CD8-positive, alpha-beta T cell (primary cell): ENCODE measurements at regions of chr1 and their contacts with region 1.

Region 1: GRCh38 chr1:109112652-109113285 is 1.1 kb upstream of the ELAPOR1 start:
- DNase-seq: peak; percentile 81 to 94 (median 89)
- ATAC-seq: peak; percentile 56
- H3K4me3 ChIP-seq: peak overlapping the region; percentile 46 to 66
- H3K4me3 Mint-ChIP-seq: peak overlapping the region; percentile 83
- H3K27ac ChIP-seq: peak overlapping the region; percentile 34 to 48
- H3K27ac Mint-ChIP-seq: peak overlapping the region; percentile 81
- H3K4me1 ChIP-seq: peaks cover 22% of the 10 kb centered on the region
- H3K4me1 Mint-ChIP-seq: peaks cover 29% of the 10 kb centered on the region
- H3K27me3 ChIP-seq: peaks cover 0 to 4% of the 10 kb centered on the region in 2 experiments
- H3K27me3 Mint-ChIP-seq: peaks cover 2% of the 10 kb centered on the region
- CTCF ChIP-seq: peak; percentile 90

Region 2: DNA sequence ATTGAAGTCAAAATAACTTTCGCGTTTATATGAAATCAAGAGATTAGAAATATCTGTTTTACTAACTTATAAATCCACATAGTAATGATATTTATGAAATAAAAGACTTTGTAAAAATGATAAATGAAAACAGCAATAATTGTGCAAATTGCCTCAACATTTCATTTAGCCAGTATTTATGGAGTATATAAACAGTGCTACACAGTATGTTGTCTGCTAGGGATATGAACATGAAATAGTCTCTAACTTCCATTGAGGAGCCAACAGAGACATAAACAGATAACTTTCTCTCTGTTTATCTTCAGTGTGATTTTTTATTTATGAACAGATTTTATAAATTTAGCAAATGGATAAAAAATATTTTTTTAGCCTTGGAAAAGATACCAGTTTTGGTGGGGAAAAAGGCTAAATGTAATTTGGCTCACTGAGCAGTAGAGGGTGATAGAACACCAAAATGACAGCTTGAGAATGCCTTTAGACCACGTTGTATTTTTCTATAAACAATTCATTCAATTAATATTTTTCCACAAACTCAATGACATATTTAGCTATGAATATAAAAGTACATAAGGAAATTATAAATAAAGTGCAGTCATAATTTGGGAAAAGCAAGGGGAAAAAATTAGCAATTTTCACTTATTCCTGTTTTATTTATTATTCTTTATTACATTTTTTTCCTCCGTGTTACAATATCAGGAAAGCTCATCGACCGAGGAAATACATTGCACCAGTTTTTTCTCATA is 600.4 kb before region 1 on chr1:
- CTCF ChIA-PET with region 1: no interaction called
- POLR2A ChIA-PET with region 1: no interaction called
- intact Hi-C with region 1: loop called in 1 of 2 experiments (anchors 10 kb)
- DNase-seq: peak in 2 of 9 experiments; percentile 65 to 75
- ATAC-seq: peak; percentile 69
- H3K4me3 ChIP-seq: no peak overlapping the region
- H3K4me3 Mint-ChIP-seq: no peak overlapping the region
- H3K27ac ChIP-seq: no peak overlapping the region
- H3K27ac Mint-ChIP-seq: no peak overlapping the region
- H3K4me1 ChIP-seq: no peaks in the 10 kb centered on the region
- H3K4me1 Mint-ChIP-seq: no peaks in the 10 kb centered on the region
- H3K27me3 ChIP-seq: no peaks in the 10 kb centered on the region
- H3K27me3 Mint-ChIP-seq: peaks cover 21% of the 10 kb centered on the region
- CTCF ChIP-seq: peak; percentile 99

Region 3: DNA sequence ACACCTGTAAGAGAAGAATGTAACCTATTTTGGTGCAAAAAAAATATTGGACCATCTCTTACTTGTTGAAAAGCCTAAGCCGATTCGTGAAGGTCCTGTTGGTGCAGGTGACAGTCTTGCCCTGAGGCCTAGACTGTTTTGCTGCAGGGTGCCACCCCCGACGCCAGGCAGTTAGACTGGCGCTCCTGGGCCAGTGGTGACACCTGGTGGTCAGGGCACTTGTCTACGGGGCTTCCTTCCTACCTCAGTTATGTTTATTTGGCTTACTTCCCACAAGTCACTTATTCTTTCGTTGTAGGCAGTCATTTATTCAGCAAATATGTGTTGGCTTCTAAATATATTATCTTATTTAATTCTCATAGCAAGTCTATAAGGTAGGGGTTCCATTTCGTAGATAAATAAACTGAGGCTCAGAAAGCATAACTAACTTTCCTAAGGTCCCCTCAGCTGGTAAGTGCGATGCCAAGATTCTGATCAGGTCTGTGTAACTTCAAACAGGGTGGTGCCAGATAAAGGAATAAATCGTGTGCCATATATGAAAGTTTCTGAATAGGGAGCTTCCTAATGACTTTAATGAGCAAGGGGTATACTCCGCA is 550.9 kb before region 1 on chr1:
- CTCF ChIA-PET with region 1: no interaction called
- POLR2A ChIA-PET with region 1: no interaction called
- intact Hi-C with region 1: no loop called
- DNase-seq: peak; percentile 73 to 92 (median 85)
- ATAC-seq: peak; percentile 58
- H3K4me3 ChIP-seq: peak overlapping the region; percentile 5 to 72
- H3K4me3 Mint-ChIP-seq: peak overlapping the region; percentile 64
- H3K27ac ChIP-seq: no peak overlapping the region
- H3K27ac Mint-ChIP-seq: peak overlapping the region; percentile 47
- H3K4me1 ChIP-seq: peaks cover 27% of the 10 kb centered on the region
- H3K4me1 Mint-ChIP-seq: peaks cover 48% of the 10 kb centered on the region
- H3K27me3 ChIP-seq: no peaks in the 10 kb centered on the region
- H3K27me3 Mint-ChIP-seq: no peaks in the 10 kb centered on the region
- CTCF ChIP-seq: peak; percentile 87

Region 4: GRCh38 chr1:108963052-108963686 is 149.6 kb before region 1 on chr1 and contains the start of gene CLCC1:
- CTCF ChIA-PET with region 1: interaction called, 3 read pairs
- POLR2A ChIA-PET with region 1: no interaction called
- intact Hi-C with region 1: loop called in 1 of 2 experiments (anchors 5 kb)
- DNase-seq: peak; percentile 83 to 96 (median 91)
- ATAC-seq: peak; percentile 87
- H3K4me3 ChIP-seq: peak within 1 kb of the TSS; percentile 57 to 86
- H3K4me3 Mint-ChIP-seq: peak within 1 kb of the TSS; percentile 87
- H3K27ac ChIP-seq: peak within 1 kb of the TSS; percentile 75 to 88
- H3K27ac Mint-ChIP-seq: peak within 1 kb of the TSS; percentile 92
- H3K4me1 ChIP-seq: peaks cover 24% of the 10 kb centered on the region
- H3K4me1 Mint-ChIP-seq: peaks cover 39% of the 10 kb centered on the region
- H3K27me3 ChIP-seq: no peaks in the 10 kb centered on the region
- H3K27me3 Mint-ChIP-seq: no peaks in the 10 kb centered on the region
- CTCF ChIP-seq: no peak
- total RNA-seq, gene CLCC1: 4.6 to 5.8 TPM

Region 5: GRCh38 chr1:109041621-109042468 is 70.9 kb before region 1 on chr1 and contains the start of gene WDR47:
- CTCF ChIA-PET with region 1: no interaction called
- POLR2A ChIA-PET with region 1: interaction called, 4 read pairs
- intact Hi-C with region 1: loop called (anchors 1 kb)
- DNase-seq: peak; percentile 92 to 99 (median 96)
- ATAC-seq: peak; percentile 96
- H3K4me3 ChIP-seq: peak within 1 kb of the TSS; percentile 97 to 99
- H3K4me3 Mint-ChIP-seq: peak within 1 kb of the TSS; percentile 93
- H3K27ac ChIP-seq: peak within 1 kb of the TSS; percentile 81 to 94
- H3K27ac Mint-ChIP-seq: peak within 1 kb of the TSS; percentile 92
- H3K4me1 ChIP-seq: peaks cover 10% of the 10 kb centered on the region
- H3K4me1 Mint-ChIP-seq: peaks cover 16% of the 10 kb centered on the region
- H3K27me3 ChIP-seq: no peaks in the 10 kb centered on the region
- H3K27me3 Mint-ChIP-seq: no peaks in the 10 kb centered on the region
- CTCF ChIP-seq: no peak
- total RNA-seq, gene WDR47: 31.5 to 32.6 TPM

Region 6: DNA sequence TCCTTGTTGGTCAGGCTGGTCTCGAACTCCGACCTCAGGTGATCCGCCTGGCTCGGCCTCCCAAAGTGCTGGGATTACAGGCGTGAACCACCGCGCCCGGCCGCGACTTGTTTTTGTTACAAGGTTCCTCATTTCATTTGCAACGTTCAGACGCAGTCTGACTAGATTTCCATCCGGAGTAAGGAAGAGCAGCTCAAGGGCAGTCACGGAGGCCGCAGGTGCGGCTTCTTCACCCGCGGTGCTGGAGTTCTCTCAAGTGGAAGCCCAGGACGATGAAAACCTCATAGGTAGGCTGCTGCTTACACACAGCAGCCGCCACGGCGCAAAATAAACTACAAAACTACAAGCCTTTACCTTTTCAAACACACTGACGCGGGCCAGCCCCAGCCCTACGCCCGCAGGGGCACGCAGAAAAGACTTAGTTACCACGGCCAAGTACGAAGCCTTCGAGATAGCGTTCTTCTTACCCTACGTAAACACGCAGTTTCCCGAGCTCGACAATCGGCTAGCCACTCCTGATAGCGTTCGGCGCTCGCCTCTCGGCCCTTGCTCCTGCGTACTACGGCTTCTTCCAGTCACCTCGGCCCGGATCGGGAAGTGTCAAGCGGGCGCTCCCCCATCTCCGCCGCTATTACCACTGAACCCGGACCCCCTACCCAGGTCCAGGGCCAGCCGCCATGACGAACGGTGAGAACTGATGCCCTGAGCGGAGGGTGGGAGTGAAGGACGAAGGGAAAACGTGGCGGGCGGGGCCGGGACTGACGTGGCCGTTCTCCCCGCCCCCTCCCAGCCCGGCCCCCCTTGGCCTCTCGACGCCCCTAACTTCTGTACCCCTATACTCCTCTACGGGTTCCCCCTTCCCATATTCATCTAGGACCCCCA is 22.3 kb before region 1 on chr1 and contains the start of gene TMEM167B:
- CTCF ChIA-PET with region 1: interaction called, 14 read pairs
- POLR2A ChIA-PET with region 1: no interaction called
- intact Hi-C with region 1: no loop called
- DNase-seq: peak; percentile 76 to 94 (median 88)
- ATAC-seq: peak; percentile 94
- H3K4me3 ChIP-seq: peak within 1 kb of the TSS; percentile 84 to 96
- H3K4me3 Mint-ChIP-seq: peak within 1 kb of the TSS; percentile 96
- H3K27ac ChIP-seq: peak within 1 kb of the TSS; percentile 82 to 98
- H3K27ac Mint-ChIP-seq: peak within 1 kb of the TSS; percentile 95
- H3K4me1 ChIP-seq: peaks cover 20% of the 10 kb centered on the region
- H3K4me1 Mint-ChIP-seq: peaks cover 33% of the 10 kb centered on the region
- H3K27me3 ChIP-seq: no peaks in the 10 kb centered on the region
- H3K27me3 Mint-ChIP-seq: no peaks in the 10 kb centered on the region
- CTCF ChIP-seq: no peak
- total RNA-seq, gene TMEM167B: 66.3 to 68.0 TPM

Region 7: DNA sequence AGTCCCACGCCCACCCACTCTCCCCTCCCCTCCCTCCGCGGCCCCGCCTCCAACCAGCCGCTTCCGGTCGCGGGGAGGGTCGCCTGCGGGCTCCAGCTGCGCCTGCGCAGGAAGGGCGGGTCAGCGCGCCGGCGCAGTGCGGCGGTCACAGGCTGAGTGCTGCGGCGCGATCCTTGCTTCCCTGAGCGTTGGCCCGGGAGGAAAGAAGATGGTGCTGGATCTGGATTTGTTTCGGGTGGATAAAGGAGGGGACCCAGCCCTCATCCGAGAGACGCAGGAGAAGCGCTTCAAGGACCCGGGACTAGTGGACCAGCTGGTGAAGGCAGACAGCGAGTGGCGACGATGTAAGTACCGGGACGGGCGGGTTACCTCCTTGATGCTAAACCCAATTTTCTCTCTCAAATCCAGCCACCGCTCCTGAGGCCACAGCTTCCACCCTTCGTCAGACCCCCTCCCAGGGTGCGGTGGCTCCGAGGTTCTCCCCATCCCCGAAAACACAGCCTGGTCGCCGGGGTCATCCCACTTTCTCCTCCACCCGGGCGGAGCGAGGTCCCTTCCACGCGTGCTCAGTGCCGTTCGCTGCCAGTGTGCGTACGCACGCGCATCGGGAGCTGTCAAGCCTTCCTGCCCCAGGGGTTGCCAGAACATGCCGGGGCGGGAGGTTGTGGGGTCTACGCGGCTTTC is 101.2 kb after region 1 on chr1 and contains the start of gene SARS1:
- CTCF ChIA-PET with region 1: interaction called, 3 read pairs
- POLR2A ChIA-PET with region 1: no interaction called
- intact Hi-C with region 1: loop called (anchors 1 to 5 kb)
- DNase-seq: peak; percentile 67 to 94 (median 85)
- ATAC-seq: peak; percentile 86
- H3K4me3 ChIP-seq: peak within 1 kb of the TSS; percentile 96 to 100
- H3K4me3 Mint-ChIP-seq: peak within 1 kb of the TSS; percentile 100
- H3K27ac ChIP-seq: peak within 1 kb of the TSS; percentile 79
- H3K27ac Mint-ChIP-seq: peak within 1 kb of the TSS; percentile 95
- H3K4me1 ChIP-seq: peaks cover 27% of the 10 kb centered on the region
- H3K4me1 Mint-ChIP-seq: peaks cover 44% of the 10 kb centered on the region
- H3K27me3 ChIP-seq: no peaks in the 10 kb centered on the region
- H3K27me3 Mint-ChIP-seq: peaks cover 2% of the 10 kb centered on the region
- CTCF ChIP-seq: no peak
- total RNA-seq, gene SARS1: 113 to 118 TPM

Region 8: GRCh38 chr1:109483672-109484518 is 371.1 kb after region 1 on chr1 and contains the start of gene ATXN7L2:
- CTCF ChIA-PET with region 1: no interaction called
- POLR2A ChIA-PET with region 1: interaction called, 3 read pairs
- intact Hi-C with region 1: loop called in 1 of 2 experiments (anchors 5 kb)
- DNase-seq: peak; percentile 87 to 97 (median 92)
- ATAC-seq: peak; percentile 81
- H3K4me3 ChIP-seq: peak within 1 kb of the TSS; percentile 78 to 90
- H3K4me3 Mint-ChIP-seq: peak within 1 kb of the TSS; percentile 94
- H3K27ac ChIP-seq: peak within 1 kb of the TSS; percentile 78 to 93
- H3K27ac Mint-ChIP-seq: peak within 1 kb of the TSS; percentile 91
- H3K4me1 ChIP-seq: peaks cover 22% of the 10 kb centered on the region
- H3K4me1 Mint-ChIP-seq: peaks cover 35% of the 10 kb centered on the region
- H3K27me3 ChIP-seq: no peaks in the 10 kb centered on the region
- H3K27me3 Mint-ChIP-seq: peaks cover 2% of the 10 kb centered on the region
- CTCF ChIP-seq: no peak
- total RNA-seq, gene ATXN7L2: 16.8 to 19.4 TPM